Caco-2 (cell line): ENCODE measurements at regions of chr1 and their contacts with region 1.

Region 1: DNA sequence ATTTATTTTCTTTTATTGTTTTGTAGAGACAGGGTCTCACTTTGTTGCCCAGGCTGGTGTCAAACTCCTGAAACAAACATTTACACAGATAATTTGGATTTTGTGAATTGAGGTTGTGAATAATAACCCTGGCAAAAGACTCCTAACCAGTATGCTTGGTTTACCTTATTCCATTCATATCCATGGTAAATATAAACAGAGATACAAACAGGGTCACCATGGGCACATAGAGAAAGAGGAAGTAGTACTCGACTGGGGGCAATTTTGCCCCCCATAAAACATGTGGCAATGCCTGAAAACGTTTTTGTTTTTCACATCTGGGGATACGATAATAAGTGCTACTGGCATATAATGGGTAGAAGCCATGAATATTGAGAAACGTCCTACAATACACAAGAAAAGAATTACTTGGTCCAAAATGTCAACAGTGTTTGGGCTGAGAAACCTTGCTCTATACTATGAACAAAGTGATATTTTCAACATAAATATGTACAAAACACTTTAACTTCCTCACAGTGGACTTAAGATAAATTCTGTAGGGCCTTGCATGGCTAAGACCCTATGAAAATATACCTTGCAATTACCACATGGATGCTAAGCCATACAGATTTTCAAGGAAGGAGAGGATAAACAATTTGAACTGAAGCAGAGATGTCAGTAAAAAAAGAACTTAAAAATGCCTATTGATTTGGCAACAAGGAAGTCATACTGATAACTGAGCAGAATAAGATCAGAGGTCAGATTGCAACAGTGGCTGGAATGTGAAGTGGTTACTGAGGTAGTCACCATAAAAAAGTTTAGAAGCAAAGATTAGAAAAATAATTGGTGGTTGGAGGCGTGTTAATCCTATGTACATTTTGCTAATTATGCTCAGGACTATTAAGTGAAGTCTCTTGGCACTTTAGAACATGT is 27.4 kb upstream of the ASPM start:
- DNase-seq: peak; percentile 63 to 69
- H3K4me3 ChIP-seq: no peak overlapping the region
- H3K4me3 Mint-ChIP-seq: peak overlapping the region; percentile 30
- H3K27ac Mint-ChIP-seq: peak overlapping the region; percentile 50
- H3K4me1 ChIP-seq: peaks cover 38% of the 10 kb centered on the region
- H3K4me1 Mint-ChIP-seq: peaks cover 21% of the 10 kb centered on the region
- H3K27me3 ChIP-seq: no peaks in the 10 kb centered on the region
- H3K27me3 Mint-ChIP-seq: no peaks in the 10 kb centered on the region
- CTCF ChIP-seq: no peak

Region 2: DNA sequence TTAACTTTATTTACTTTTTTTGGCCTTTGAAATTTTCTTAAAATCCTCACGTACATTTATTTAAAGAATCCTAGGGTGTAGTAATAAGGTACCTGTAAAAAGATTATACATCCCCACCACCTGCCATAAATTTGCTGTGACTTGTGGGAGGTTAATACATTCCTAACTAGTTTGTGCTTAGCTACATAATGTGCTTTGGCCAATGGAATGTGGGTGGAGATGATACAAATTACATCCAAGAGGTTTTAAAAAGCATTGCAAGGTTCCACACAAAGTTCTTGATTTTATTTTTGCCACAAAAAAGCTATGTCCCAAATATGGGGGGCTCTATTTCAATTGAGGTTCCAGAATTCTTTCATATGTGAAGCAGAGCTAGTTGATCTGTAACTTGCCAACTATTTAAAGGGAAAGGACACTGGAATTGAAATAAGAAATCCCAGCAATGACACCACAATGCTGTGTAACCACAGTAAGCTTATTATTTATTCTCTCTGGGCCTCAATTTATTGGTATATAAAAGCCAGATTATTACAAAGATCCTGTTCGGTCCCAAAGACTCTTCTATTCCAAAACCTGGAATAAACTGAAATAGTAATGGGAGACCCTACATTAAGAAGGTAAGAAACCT is 43.0 kb before region 1 on chr1:
- CTCF ChIA-PET with region 1: no interaction called
- POLR2A ChIA-PET with region 1: no interaction called
- intact Hi-C with region 1: loop called (anchors 1 kb)
- DNase-seq: no peak
- H3K4me3 ChIP-seq: no peak overlapping the region
- H3K4me3 Mint-ChIP-seq: no peak overlapping the region
- H3K27ac Mint-ChIP-seq: no peak overlapping the region
- H3K4me1 ChIP-seq: peaks cover 14% of the 10 kb centered on the region
- H3K4me1 Mint-ChIP-seq: no peaks in the 10 kb centered on the region
- H3K27me3 ChIP-seq: no peaks in the 10 kb centered on the region
- H3K27me3 Mint-ChIP-seq: no peaks in the 10 kb centered on the region
- CTCF ChIP-seq: no peak

Region 3: GRCh38 chr1:197146197-197146889 is 27.5 kb before region 1 on chr1 and contains the start of gene ASPM:
- CTCF ChIA-PET with region 1: no interaction called
- POLR2A ChIA-PET with region 1: no interaction called
- intact Hi-C with region 1: loop called (anchors 1 kb)
- DNase-seq: peak; percentile 95 to 96
- H3K4me3 ChIP-seq: peak within 1 kb of the TSS; percentile 58
- H3K4me3 Mint-ChIP-seq: peak within 1 kb of the TSS; percentile 96
- H3K27ac Mint-ChIP-seq: peak within 1 kb of the TSS; percentile 97
- H3K4me1 ChIP-seq: peaks cover 8% of the 10 kb centered on the region
- H3K4me1 Mint-ChIP-seq: peaks cover 5% of the 10 kb centered on the region
- H3K27me3 ChIP-seq: no peaks in the 10 kb centered on the region
- H3K27me3 Mint-ChIP-seq: no peaks in the 10 kb centered on the region
- CTCF ChIP-seq: no peak
- total RNA-seq, gene ASPM: 41.9 and 42.7 TPM in 2 replicates

Region 4: DNA sequence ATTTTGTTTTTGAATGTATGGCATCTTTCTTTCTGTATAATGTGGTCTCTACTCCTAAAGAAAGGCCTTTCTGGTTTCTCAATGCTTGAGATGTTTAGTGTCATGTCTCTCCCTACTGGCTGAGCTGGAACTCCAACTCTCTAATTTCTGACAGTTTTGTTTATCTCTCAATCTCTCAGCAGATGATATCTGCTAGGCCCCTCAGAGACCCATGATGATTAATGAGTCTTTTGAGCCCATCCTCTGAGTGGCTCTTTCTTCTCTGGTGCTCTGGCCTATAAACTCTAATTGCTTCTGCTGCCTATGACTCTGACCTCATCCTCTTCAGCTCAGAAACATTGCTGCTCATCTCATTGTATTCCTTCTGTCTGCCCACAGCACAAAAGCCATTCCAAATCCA is 140.9 kb after region 1 on chr1:
- CTCF ChIA-PET with region 1: no interaction called
- POLR2A ChIA-PET with region 1: no interaction called
- intact Hi-C with region 1: loop called (anchors 1 kb)
- DNase-seq: no peak
- H3K4me3 ChIP-seq: no peak overlapping the region
- H3K4me3 Mint-ChIP-seq: no peak overlapping the region
- H3K27ac Mint-ChIP-seq: no peak overlapping the region
- H3K4me1 ChIP-seq: peaks cover 21% of the 10 kb centered on the region
- H3K4me1 Mint-ChIP-seq: peaks cover 21% of the 10 kb centered on the region
- H3K27me3 ChIP-seq: no peaks in the 10 kb centered on the region
- H3K27me3 Mint-ChIP-seq: no peaks in the 10 kb centered on the region
- CTCF ChIP-seq: no peak